ENCODE measurements at regions of chr3 and their contacts with region 1.

Region 1: GRCh38 chr3:105752744-105753415 is 115.9 kb downstream of the CBLB start:
- DNase-seq: peak in 7 of 9 donors; percentile 70 to 90 (median 86)
- ATAC-seq: peak; percentile 89
- H3K4me3 ChIP-seq: peak overlapping the region; percentile 20
- H3K4me3 Mint-ChIP-seq: peak overlapping the region; percentile 64 to 85 (median 80)
- H3K27ac ChIP-seq: peak overlapping the region; percentile 71
- H3K27ac Mint-ChIP-seq: peak overlapping the region; percentile 91 to 99 (median 98)
- H3K4me1 ChIP-seq: peaks cover 75 to 87% of the 10 kb centered on the region in 2 donors
- H3K4me1 Mint-ChIP-seq: peaks cover 31 to 96% (median 83%) of the 10 kb centered on the region in 7 donors
- H3K27me3 ChIP-seq: no peaks in the 10 kb centered on the region
- H3K27me3 Mint-ChIP-seq: no peaks in the 10 kb centered on the region

Region 2: GRCh38 chr3:105246536-105246935 is 506.3 kb before region 1 on chr3:
- CTCF ChIA-PET with region 1: no interaction called
- POLR2A ChIA-PET with region 1: no interaction called
- intact Hi-C with region 1: no loop called
- DNase-seq: no peak
- ATAC-seq: no peak
- H3K4me3 ChIP-seq: no peak overlapping the region
- H3K4me3 Mint-ChIP-seq: no peak overlapping the region
- H3K27ac ChIP-seq: no peak overlapping the region
- H3K27ac Mint-ChIP-seq: no peak overlapping the region
- H3K4me1 ChIP-seq: no peaks in the 10 kb centered on the region
- H3K4me1 Mint-ChIP-seq: no peaks in the 10 kb centered on the region
- H3K27me3 ChIP-seq: no peaks in the 10 kb centered on the region
- H3K27me3 Mint-ChIP-seq: peaks cover 0 to 13% (median 6%) of the 10 kb centered on the region in 5 donors

Region 3: DNA sequence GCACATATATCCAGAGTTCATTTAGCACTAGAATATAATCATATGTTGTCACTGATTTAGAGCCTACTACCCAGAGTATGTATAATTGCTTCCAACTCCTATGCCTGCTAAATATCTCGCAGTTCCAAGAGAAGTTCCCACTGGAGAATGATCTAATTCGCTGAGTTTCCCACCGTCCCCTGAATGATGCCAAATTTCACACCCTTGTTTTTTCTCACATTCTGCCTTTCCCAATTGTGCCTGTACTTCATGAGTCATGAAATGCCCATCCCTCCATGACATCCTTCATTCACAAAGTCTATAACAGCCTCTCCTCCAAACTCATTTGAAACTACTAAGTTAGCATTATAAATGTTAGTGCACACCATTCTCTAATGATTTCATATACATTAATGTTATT is 61.2 kb before region 1 on chr3:
- CTCF ChIA-PET with region 1: no interaction called
- POLR2A ChIA-PET with region 1: no interaction called
- intact Hi-C with region 1: loop called (anchors 1 to 5 kb)
- DNase-seq: no peak
- ATAC-seq: no peak
- H3K4me3 ChIP-seq: no peak overlapping the region
- H3K4me3 Mint-ChIP-seq: no peak overlapping the region
- H3K27ac ChIP-seq: no peak overlapping the region
- H3K27ac Mint-ChIP-seq: peak overlapping the region in 8 of 9 donors; percentile 16 to 82 (median 43)
- H3K4me1 ChIP-seq: peaks cover 3 to 5% of the 10 kb centered on the region in 2 donors
- H3K4me1 Mint-ChIP-seq: peaks cover 15 to 54% (median 42%) of the 10 kb centered on the region in 7 donors
- H3K27me3 ChIP-seq: no peaks in the 10 kb centered on the region
- H3K27me3 Mint-ChIP-seq: no peaks in the 10 kb centered on the region

Region 4: DNA sequence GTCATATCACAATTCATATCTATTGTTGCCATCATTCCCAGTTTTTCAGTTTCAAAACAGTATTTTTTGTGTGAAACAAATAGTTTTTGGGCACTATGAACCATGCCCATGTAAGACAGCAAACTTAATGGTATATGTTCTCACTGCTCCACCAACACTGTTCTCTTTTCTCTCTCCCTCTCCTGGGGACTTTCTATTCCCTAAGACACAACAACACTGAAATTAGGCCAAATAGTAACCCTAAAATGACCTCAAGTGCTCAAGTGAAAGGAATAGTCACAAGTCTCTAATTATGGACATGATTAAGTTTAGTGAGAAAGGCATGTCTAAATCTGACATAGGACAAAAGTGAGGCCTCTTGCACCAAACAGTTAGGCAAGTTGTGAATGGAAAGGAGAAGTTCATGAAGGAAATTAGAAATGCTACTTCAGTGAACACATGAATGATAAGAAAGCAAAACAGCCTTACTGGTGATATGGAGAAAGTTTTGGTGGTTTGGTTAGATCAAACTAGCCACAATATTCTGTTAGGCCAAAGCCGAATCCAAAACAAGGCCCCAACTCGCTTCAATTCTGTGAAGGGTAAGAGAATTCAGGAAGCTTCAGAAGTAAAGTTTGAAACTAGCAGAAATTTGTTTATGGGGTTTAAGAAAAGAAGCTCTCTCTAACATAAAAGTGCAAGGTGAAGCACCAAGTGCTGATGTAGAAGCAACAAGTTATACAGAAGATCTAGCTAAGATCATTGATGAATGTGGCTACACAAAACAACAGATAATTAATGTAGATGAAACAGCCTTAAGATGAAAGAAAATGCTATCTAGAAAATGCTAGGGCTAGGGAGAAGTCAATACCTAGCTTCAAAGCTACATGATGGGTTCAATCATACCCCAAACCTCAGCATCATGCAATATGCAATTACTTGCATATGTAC is 11.8 kb after region 1 on chr3:
- CTCF ChIA-PET with region 1: no interaction called
- POLR2A ChIA-PET with region 1: interaction called, 5 read pairs
- intact Hi-C with region 1: loop called (anchors 1 kb)
- DNase-seq: peak in 7 of 9 donors; percentile 22 to 75 (median 56)
- ATAC-seq: peak; percentile 71
- H3K4me3 ChIP-seq: no peak overlapping the region
- H3K4me3 Mint-ChIP-seq: peak overlapping the region in 9 of 10 donors; percentile 14 to 75 (median 61)
- H3K27ac ChIP-seq: peak overlapping the region; percentile 47
- H3K27ac Mint-ChIP-seq: peak overlapping the region; percentile 63 to 90 (median 86)
- H3K4me1 ChIP-seq: peaks cover 40 to 55% of the 10 kb centered on the region in 2 donors
- H3K4me1 Mint-ChIP-seq: peaks cover 42 to 88% (median 75%) of the 10 kb centered on the region in 7 donors
- H3K27me3 ChIP-seq: no peaks in the 10 kb centered on the region
- H3K27me3 Mint-ChIP-seq: no peaks in the 10 kb centered on the region

Region 5: DNA sequence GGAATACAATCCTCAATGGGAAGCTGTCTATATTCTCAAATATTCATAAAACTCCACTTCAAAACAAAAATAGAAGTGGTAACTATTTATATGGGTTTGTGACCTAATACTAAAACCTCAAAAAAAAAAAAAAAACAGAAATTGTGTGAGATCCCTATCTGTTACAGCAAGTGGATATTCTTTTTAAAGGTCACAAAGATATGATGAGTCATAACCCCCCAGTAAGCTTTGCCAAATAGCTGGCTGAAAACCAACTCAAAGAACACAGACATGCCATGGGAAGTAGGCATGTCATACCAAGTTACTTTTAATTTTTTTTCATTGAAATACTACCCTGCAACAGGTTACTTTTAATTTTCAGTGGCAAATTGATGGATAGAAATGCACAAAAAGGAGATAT is 53.5 kb after region 1 on chr3:
- CTCF ChIA-PET with region 1: interaction called, 3 read pairs
- POLR2A ChIA-PET with region 1: no interaction called
- intact Hi-C with region 1: loop called (anchors 1 kb)
- DNase-seq: no peak
- ATAC-seq: peak; percentile 78
- H3K4me3 ChIP-seq: no peak overlapping the region
- H3K4me3 Mint-ChIP-seq: peak overlapping the region in 1 of 10 donors; percentile 11
- H3K27ac ChIP-seq: no peak overlapping the region
- H3K27ac Mint-ChIP-seq: peak overlapping the region in 4 of 9 donors; percentile 0 to 85 (median 44)
- H3K4me1 ChIP-seq: peaks cover 11 to 23% of the 10 kb centered on the region in 2 donors
- H3K4me1 Mint-ChIP-seq: peaks cover 39 to 86% (median 65%) of the 10 kb centered on the region in 7 donors
- H3K27me3 ChIP-seq: no peaks in the 10 kb centered on the region
- H3K27me3 Mint-ChIP-seq: no peaks in the 10 kb centered on the region

Region 6: GRCh38 chr3:105868742-105869530 is 116.1 kb after region 1 on chr3 and contains the start of gene CBLB:
- CTCF ChIA-PET with region 1: no interaction called
- POLR2A ChIA-PET with region 1: interaction called, 3 read pairs
- intact Hi-C with region 1: loop called (anchors 1 kb)
- DNase-seq: peak; percentile 72 to 89 (median 85)
- ATAC-seq: peak; percentile 93
- H3K4me3 ChIP-seq: peak within 1 kb of the TSS; percentile 86
- H3K4me3 Mint-ChIP-seq: peak within 1 kb of the TSS; percentile 89 to 100 (median 97)
- H3K27ac ChIP-seq: peak within 1 kb of the TSS; percentile 91
- H3K27ac Mint-ChIP-seq: peak within 1 kb of the TSS; percentile 89 to 98 (median 94)
- H3K4me1 ChIP-seq: peaks cover 31 to 41% of the 10 kb centered on the region in 2 donors
- H3K4me1 Mint-ChIP-seq: peaks cover 23 to 58% (median 49%) of the 10 kb centered on the region in 7 donors
- H3K27me3 ChIP-seq: no peaks in the 10 kb centered on the region
- H3K27me3 Mint-ChIP-seq: no peaks in the 10 kb centered on the region
- total RNA-seq, gene CBLB: 82.8 to 135 (median 109) TPM

Region 7: DNA sequence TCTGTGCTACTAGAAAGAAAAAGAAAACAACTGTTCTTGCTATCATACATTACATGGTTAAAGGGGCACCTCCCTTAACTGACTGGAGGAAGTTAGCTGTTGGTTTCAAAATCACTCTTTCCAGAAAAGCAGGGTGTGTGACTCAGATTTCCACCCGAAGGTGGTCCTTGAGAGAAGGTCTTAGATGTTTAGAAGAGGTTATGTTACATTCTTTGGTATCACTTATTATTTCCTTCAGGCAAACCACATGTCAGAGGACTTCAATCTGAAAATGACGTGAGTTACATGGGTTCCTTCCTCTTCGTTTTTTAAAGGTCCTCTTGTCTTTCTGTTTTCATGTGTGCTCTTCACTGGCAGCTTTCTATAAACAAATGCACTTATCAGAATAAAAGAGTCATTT is 423.9 kb after region 1 on chr3:
- CTCF ChIA-PET with region 1: no interaction called
- POLR2A ChIA-PET with region 1: no interaction called
- intact Hi-C with region 1: loop called (anchors 2 kb)
- DNase-seq: peak in 8 of 9 donors; percentile 59 to 86 (median 78)
- ATAC-seq: peak; percentile 94
- H3K4me3 ChIP-seq: peak overlapping the region; percentile 28
- H3K4me3 Mint-ChIP-seq: peak overlapping the region; percentile 1 to 79 (median 73)
- H3K27ac ChIP-seq: peak overlapping the region; percentile 43
- H3K27ac Mint-ChIP-seq: peak overlapping the region; percentile 50 to 91 (median 87)
- H3K4me1 ChIP-seq: peaks cover 28 to 32% of the 10 kb centered on the region in 2 donors
- H3K4me1 Mint-ChIP-seq: peaks cover 33 to 61% (median 56%) of the 10 kb centered on the region in 7 donors
- H3K27me3 ChIP-seq: no peaks in the 10 kb centered on the region
- H3K27me3 Mint-ChIP-seq: no peaks in the 10 kb centered on the region

Region 8: DNA sequence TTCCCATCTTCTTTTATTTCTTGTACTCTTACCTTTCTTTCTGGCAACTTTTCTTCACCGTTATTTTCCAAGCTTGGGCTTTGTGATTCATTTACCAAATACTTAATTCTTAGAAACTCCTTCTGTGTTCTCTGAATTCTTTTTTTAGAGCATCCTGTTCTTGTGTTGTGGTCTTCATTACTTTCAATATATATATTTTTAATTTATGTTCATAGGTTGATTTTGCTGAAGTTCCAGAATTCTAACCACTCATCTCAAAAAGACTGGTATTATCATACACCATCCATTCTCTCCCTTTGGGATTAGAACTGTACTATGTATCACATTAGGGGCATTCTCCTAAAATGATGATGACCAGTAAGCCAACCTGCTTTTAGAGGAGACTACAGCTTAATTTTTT is 478.2 kb after region 1 on chr3:
- CTCF ChIA-PET with region 1: no interaction called
- POLR2A ChIA-PET with region 1: no interaction called
- intact Hi-C with region 1: loop called in 1 of 2 experiments (anchors 2 kb)
- DNase-seq: no peak
- ATAC-seq: no peak
- H3K4me3 ChIP-seq: no peak overlapping the region
- H3K4me3 Mint-ChIP-seq: peak overlapping the region in 9 of 10 donors; percentile 3 to 80 (median 64)
- H3K27ac ChIP-seq: no peak overlapping the region
- H3K27ac Mint-ChIP-seq: peak overlapping the region in 8 of 9 donors; percentile 2 to 90 (median 46)
- H3K4me1 ChIP-seq: peaks cover 4 to 8% of the 10 kb centered on the region in 2 donors
- H3K4me1 Mint-ChIP-seq: peaks cover 10 to 47% (median 37%) of the 10 kb centered on the region in 7 donors
- H3K27me3 ChIP-seq: no peaks in the 10 kb centered on the region
- H3K27me3 Mint-ChIP-seq: no peaks in the 10 kb centered on the region